Right ventricle myocardium inferior (tissue), 1 donor: ENCODE measurements at regions of chr9 and their contacts with region 1.

Region 1: GRCh38 chr9:129258124-129258822 is 80.2 kb upstream of the IER5L start:
- DNase-seq: peak; percentile 97
- ATAC-seq: peak; percentile 86

Region 2: GRCh38 chr9:129177791-129178559 is 80.3 kb before region 1 on chr9 and contains the start of gene IER5L:
- intact Hi-C with region 1: loop called (anchors 2 kb)
- DNase-seq: peak; percentile 98
- ATAC-seq: peak; percentile 84
- total RNA-seq, gene IER5L: 4.6 TPM

Region 3: GRCh38 chr9:129320575-129321263 is 62.4 kb after region 1 on chr9:
- intact Hi-C with region 1: loop called (anchors 5 kb)
- DNase-seq: peak; percentile 86
- ATAC-seq: peak; percentile 78

Region 4: GRCh38 chr9:129333953-129334724 is 75.9 kb after region 1 on chr9:
- intact Hi-C with region 1: loop called (anchors 5 kb)
- DNase-seq: peak; percentile 97
- ATAC-seq: peak; percentile 92

Region 5: DNA sequence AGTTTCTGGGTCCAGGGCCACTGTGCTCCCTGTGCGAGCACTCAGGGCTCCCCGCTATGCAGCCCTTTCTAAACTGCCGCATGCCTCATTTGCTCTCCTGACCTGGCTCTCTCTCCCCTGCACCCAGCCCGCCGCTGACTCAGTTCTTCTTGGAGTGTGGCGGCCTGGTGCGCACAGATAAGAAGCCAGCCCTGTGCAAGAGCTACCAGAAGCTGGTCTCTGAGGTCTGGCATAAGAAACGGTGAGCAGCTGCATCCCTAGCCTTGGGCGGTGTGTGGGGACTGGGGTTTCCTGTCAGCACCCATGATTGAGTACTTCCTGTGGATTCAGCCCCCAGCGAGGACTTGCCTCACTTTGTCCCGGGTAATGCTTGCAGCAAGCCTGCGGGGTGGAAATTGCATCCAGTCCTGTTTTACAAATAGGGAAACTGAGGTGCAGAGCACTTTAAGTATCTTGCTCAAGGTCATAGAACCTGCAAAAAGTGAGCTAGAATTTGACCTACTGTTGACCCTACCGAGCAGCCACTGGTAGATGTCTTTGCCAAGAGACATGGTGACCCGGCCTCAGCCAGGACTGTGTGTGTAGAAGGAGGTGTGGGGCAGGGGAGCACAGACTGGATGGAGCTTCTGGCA is 604.9 kb after region 1 on chr9:
- intact Hi-C with region 1: no loop called
- DNase-seq: no peak
- ATAC-seq: no peak

Region 6: DNA sequence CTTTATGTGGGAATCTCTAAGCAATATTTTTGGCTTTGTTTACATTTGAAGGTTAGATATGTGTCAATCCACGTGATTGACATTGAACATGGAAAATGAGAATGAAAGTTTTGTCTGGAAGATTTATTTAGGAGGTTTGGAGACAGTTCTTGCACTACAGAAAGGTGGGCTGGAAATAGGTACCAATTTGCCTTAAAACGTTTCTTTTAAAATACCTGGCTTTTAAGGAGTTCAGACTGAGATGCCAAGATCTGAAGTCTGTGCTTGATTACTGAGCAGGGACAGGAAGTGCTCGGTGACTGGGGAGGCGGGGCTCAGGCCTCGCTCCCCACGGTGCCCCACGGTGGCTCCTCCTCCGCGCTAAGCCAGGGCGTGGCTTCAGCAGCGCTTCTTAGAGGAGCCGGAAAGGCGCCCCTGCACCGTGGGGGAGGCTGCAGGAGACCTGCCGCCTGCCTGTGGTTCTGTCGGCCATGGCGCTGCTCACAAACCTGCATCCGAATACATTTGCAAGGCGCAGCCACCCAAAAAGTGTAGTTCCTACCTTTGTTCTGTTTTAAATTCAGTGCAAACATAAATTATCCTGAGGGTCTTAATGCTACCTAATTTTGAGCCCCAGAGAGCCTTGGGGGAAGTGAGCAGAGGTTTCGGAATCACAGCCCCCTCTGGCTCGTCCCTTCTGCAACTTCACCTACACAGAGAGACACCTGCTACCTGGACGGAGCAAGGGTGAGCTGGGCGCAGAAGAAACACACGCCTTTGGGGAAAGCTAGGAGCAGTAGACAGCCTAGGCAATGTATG is 626.1 kb after region 1 on chr9:
- intact Hi-C with region 1: no loop called
- DNase-seq: peak; percentile 96
- ATAC-seq: peak; percentile 76